ENCODE measurements at regions of chr1 and their contacts with region 1.

Region 1: GRCh38 chr1:77533660-77534305 is 148.7 kb downstream of the ZZZ3 start:
- DNase-seq: peak; percentile 43 to 62
- H3K4me3 ChIP-seq: no peak overlapping the region
- H3K27ac ChIP-seq: no peak overlapping the region
- H3K4me1 ChIP-seq: peaks cover 5 to 6% of the 10 kb centered on the region in 2 donors
- H3K27me3 ChIP-seq: no peaks in the 10 kb centered on the region
- CTCF ChIP-seq: peak; percentile 41 to 85 (median 70)
- POLR2A ChIP-seq: no peak

Region 2: DNA sequence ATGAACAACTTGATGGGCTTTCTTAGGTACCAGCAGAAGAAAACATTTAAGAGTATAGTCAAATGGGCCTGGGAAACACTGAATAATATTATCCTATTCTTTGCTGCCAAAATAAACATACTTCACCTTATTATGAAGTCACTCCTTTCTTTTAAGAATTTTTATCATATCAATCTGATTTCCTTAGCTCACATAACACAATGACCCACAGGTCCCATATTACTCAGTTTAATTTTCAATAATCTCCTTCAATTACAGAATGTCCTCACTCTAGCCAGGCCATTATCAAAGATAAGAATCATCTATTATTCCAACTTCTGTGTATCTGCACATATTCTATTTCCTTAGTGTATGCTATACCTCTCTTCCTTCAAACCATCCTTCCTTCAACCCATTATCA is 377.6 kb before region 1 on chr1:
- intact Hi-C with region 1: loop called (anchors 10 kb)
- DNase-seq: no peak
- H3K4me3 ChIP-seq: no peak overlapping the region
- H3K27ac ChIP-seq: no peak overlapping the region
- H3K4me1 ChIP-seq: no peaks in the 10 kb centered on the region
- H3K27me3 ChIP-seq: no peaks in the 10 kb centered on the region
- CTCF ChIP-seq: no peak
- POLR2A ChIP-seq: no peak

Measured in thyroid gland (tissue), 4 donors.